ENCODE measurements at regions of chr3 and their contacts with region 1.

Region 1: DNA sequence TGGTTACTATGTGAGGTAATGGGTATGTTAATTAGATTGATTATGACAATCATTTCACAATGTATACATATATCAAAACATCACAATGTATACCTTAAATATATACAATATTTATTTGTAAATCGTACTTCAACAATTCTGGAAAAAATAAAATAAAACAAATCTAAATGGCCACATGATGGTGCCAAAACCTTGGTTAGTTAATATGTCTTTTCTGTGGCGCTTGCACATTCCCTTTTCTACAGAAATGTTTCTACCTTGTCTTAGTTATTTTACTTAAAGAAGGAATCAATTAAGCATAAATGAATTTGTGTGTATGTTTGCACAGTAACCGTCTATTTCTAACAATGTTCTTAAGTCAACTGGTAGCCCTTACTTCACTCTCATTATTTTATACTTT is 53.4 kb downstream of the OXSM start:
- DNase-seq: peak; percentile 14
- H3K4me3 Mint-ChIP-seq: no peak overlapping the region
- H3K27ac Mint-ChIP-seq: no peak overlapping the region
- H3K4me1 Mint-ChIP-seq: no peaks in the 10 kb centered on the region
- H3K27me3 Mint-ChIP-seq: no peaks in the 10 kb centered on the region
- CTCF ChIP-seq: peak; percentile 42

Region 2: DNA sequence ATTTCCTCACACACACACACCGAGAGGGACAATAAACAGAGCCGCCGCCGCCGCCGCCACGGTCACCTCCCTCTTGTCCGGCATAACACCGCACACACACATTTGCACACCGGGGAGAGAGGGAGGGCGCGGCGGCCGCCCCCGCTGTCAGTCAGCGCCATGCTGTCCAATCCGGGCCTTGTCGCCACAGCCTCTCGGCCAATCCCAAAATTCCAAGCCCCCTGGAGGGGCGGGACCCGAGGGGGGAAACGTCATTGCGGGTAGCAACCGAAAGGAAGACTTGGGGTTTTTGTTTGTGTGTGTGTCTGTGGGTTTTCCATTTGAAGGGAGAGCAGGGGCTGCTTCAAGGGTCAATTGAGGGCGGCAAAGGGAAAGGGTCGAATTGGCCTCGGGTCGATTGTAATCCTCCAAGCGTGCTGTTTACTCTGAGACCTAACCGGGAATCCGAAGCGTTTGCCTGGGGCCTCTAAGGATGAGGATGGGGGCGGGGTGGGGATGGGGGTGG is 178.5 kb before region 1 on chr3 and contains the start of gene TOP2B:
- CTCF ChIA-PET with region 1: no interaction called
- POLR2A ChIA-PET with region 1: no interaction called
- intact Hi-C with region 1: loop called (anchors 5 kb)
- DNase-seq: peak; percentile 95
- H3K4me3 Mint-ChIP-seq: peak within 1 kb of the TSS; percentile 99
- H3K27ac Mint-ChIP-seq: peak within 1 kb of the TSS; percentile 96
- H3K4me1 Mint-ChIP-seq: peaks cover 23% of the 10 kb centered on the region
- H3K27me3 Mint-ChIP-seq: no peaks in the 10 kb centered on the region
- CTCF ChIP-seq: no peak
- total RNA-seq, gene TOP2B: 77.8 and 88.7 TPM in 2 replicates

Region 3: DNA sequence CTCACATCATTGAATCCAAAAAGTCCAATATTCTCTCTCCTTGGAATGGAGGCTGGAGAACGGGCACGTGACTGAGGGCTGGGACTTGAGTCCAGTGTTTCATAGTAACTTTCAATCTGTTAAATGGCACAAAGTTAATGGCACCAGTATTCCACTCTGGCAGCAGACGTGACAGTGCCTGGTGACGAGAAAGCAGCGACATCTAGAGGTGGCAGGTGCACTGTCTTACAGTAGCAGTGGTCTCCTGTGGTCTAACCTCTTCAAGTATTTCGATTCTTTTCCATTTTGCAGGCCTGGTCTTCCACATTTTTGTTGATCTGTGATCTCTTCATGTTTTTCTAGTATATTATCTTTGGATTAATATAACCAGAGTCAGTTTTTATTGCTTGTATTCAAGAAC is 53.7 kb after region 1 on chr3:
- CTCF ChIA-PET with region 1: no interaction called
- POLR2A ChIA-PET with region 1: no interaction called
- intact Hi-C with region 1: loop called (anchors 1 kb)
- DNase-seq: peak; percentile 52
- H3K4me3 Mint-ChIP-seq: no peak overlapping the region
- H3K27ac Mint-ChIP-seq: no peak overlapping the region
- H3K4me1 Mint-ChIP-seq: no peaks in the 10 kb centered on the region
- H3K27me3 Mint-ChIP-seq: no peaks in the 10 kb centered on the region
- CTCF ChIP-seq: peak; percentile 52

Region 4: GRCh38 chr3:26118165-26118564 is 274.8 kb after region 1 on chr3:
- CTCF ChIA-PET with region 1: interaction called, 3 read pairs
- POLR2A ChIA-PET with region 1: no interaction called
- intact Hi-C with region 1: loop called (anchors 5 kb)
- DNase-seq: peak; percentile 4
- H3K4me3 Mint-ChIP-seq: no peak overlapping the region
- H3K27ac Mint-ChIP-seq: no peak overlapping the region
- H3K4me1 Mint-ChIP-seq: no peaks in the 10 kb centered on the region
- H3K27me3 Mint-ChIP-seq: no peaks in the 10 kb centered on the region
- CTCF ChIP-seq: peak; percentile 51

Region 5: GRCh38 chr3:27049792-27050191 is 1206.5 kb after region 1 on chr3:
- CTCF ChIA-PET with region 1: no interaction called
- POLR2A ChIA-PET with region 1: no interaction called
- intact Hi-C with region 1: no loop called
- DNase-seq: no peak
- H3K4me3 Mint-ChIP-seq: no peak overlapping the region
- H3K27ac Mint-ChIP-seq: no peak overlapping the region
- H3K4me1 Mint-ChIP-seq: no peaks in the 10 kb centered on the region
- H3K27me3 Mint-ChIP-seq: no peaks in the 10 kb centered on the region
- CTCF ChIP-seq: no peak

Region 6: DNA sequence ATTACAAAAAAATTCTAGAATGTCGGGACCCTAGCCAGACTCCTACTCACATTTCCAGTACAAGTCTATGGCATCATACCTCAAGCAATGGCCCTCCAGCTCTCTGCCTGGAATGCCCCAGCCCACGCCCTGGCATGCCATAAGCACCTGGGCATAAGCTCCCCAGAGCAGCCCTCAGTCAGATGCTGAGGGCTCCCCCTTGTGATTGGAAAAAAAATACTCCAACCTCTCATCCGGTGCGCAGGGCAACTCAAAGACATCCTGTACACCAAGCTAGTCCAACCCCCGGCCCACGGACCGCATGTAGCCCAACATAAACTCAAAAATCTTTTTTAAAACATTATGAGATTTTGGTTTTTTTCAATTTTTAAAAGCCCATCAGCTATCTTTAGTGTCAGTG is 1410.5 kb after region 1 on chr3:
- CTCF ChIA-PET with region 1: interaction called, 4 read pairs
- POLR2A ChIA-PET with region 1: no interaction called
- intact Hi-C with region 1: loop called (anchors 5 kb)
- DNase-seq: peak; percentile 69
- H3K4me3 Mint-ChIP-seq: no peak overlapping the region
- H3K27ac Mint-ChIP-seq: no peak overlapping the region
- H3K4me1 Mint-ChIP-seq: no peaks in the 10 kb centered on the region
- H3K27me3 Mint-ChIP-seq: no peaks in the 10 kb centered on the region
- CTCF ChIP-seq: peak; percentile 42